Aorta (tissue), 5 donors: ENCODE measurements at regions of chr9 and their contacts with region 1.

Region 1: DNA sequence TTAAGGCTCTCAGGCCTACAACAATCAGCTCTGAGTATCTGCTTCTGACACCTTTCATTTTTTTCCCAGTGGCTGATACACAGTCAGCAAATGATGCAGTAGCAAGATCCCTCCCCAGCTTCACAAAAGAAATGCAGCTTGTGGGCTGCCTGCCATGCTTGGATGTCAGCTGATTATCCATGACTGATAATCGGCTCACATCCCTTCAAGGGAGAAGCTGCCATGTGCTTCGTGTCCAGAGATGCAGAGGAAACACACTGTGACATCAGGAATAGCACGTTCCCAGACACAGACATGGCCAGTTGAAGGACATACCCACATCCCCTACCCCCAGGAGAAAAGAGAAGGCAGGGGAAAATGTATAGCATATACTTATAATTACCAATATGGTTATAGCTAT is 27.9 kb downstream of the TMEM215 start:
- DNase-seq: no peak
- ATAC-seq: no peak
- H3K4me3 ChIP-seq: no peak overlapping the region
- H3K27ac ChIP-seq: no peak overlapping the region
- H3K4me1 ChIP-seq: no peaks in the 10 kb centered on the region
- H3K27me3 ChIP-seq: no peaks in the 10 kb centered on the region

Region 2: GRCh38 chr9:32825203-32825602 is 14.0 kb after region 1 on chr9:
- intact Hi-C with region 1: loop called in 1 of 2 experiments (anchors 2 kb)
- DNase-seq: no peak
- ATAC-seq: no peak
- H3K4me3 ChIP-seq: no peak overlapping the region
- H3K27ac ChIP-seq: no peak overlapping the region
- H3K4me1 ChIP-seq: no peaks in the 10 kb centered on the region
- H3K27me3 ChIP-seq: no peaks in the 10 kb centered on the region